ENCODE measurements at regions of chr16 and their contacts with region 1.

Region 1: DNA sequence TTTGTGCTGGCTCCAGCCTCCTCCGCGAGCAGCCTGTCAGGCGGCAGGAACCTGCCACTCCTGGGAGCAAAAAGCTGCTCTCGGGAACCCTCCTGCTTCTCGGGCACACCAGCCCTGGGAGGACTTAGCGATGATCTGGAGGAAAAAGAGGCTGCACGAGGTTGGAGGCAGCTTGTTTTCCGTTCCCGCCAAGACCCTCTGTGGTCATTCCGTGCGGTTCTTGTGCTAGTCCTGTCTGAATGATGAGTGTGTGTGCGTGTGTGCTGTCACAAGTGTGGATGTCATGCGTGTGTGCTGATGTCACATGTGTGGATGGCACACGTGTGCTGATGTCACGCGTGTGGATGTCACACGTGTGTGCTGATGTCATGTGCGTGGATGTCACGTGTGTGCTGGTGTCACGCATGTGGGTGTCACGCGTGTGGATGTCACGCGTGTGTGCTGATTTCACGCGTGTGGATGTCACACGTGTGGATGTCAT is 150.0 kb downstream of the NPIPB11 start:
- DNase-seq: no peak
- ATAC-seq: no peak
- H3K4me3 ChIP-seq: no peak overlapping the region
- H3K27ac ChIP-seq: no peak overlapping the region
- H3K4me1 ChIP-seq: peaks cover 0 to 8% of the 10 kb centered on the region in 2 experiments; a peak in 3 of 4 replicates
- H3K27me3 ChIP-seq: no peaks in the 10 kb centered on the region
- CTCF ChIP-seq: no peak
- POLR2A ChIP-seq: no peak
- RAD21 ChIP-seq: no peak

Region 2: DNA sequence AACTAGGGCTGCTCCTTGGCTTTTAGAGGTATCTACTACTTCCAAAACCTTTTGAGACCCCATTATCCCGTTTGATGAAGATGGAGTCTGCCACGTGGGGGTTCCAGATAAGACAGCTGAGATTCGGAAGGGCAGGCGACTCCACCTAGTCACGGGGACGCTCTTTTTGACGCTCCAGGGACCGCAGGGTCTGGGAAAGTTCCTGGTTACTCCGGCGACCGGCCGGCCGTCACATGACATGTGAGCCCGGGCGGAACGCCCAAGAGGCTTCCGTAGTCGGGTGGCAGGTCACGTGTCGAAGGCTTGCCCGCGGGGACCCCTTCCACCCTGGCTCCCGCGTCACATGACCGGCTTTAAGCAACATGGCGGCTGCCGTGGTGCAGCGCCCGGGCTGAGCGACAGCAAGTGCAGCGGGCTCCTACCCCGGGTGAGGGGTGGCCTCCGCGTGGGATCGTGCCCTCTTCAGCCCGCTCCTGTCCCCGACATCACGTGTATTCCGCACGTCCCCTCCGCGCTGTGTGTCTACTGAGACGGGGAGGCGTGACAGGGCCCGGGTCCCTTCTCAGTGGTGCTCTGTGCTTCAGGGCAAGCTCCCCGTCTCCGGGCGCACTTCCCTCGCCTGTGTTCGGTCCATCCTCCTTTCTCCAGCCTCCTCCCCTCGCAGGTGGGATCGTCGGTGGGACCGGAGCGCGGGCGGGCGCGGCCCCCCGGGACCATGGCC is 281.9 kb before region 1 on chr16 and contains the start of gene SPNS1:
- CTCF ChIA-PET with region 1: no interaction called
- POLR2A ChIA-PET with region 1: no interaction called
- RAD21 ChIA-PET with region 1: interaction called in 1 of 2 experiments, 4 read pairs
- intact Hi-C with region 1: loop called (anchors 10 kb)
- DNase-seq: peak; percentile 92
- ATAC-seq: peak; percentile 83
- H3K4me3 ChIP-seq: peak within 1 kb of the TSS; percentile 97
- H3K27ac ChIP-seq: peak within 1 kb of the TSS; percentile 34
- H3K4me1 ChIP-seq: peaks cover 6 to 18% of the 10 kb centered on the region in 2 experiments; a peak in 3 of 4 replicates
- H3K27me3 ChIP-seq: no peaks in the 10 kb centered on the region
- CTCF ChIP-seq: no peak
- POLR2A ChIP-seq: peak; percentile 49
- RAD21 ChIP-seq: no peak
- total RNA-seq, gene SPNS1: 32.3 TPM

Region 3: DNA sequence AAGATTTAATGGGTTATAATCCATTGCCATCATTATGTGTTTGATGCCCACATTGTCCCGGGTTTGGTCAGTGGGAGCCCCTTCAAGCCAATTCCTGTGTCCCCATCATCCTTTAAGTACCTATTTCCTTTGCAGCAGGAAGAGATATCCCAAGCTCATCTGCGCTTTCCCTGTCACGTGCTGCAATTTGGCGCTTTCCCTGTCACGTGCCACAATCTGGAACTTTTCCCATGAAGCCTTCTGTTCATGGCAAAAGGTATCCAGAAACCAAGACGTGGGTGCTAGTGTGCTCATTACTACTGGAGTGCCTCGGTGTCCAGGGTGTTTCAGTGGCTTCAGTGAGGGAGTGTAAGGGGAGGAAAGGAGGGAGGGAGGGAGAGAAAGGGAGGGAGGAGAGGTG is 18.6 kb before region 1 on chr16:
- CTCF ChIA-PET with region 1: no interaction called
- POLR2A ChIA-PET with region 1: no interaction called
- RAD21 ChIA-PET with region 1: no interaction called
- intact Hi-C with region 1: no loop called
- DNase-seq: no peak
- ATAC-seq: no peak
- H3K4me3 ChIP-seq: no peak overlapping the region
- H3K27ac ChIP-seq: no peak overlapping the region
- H3K4me1 ChIP-seq: no peaks in the 10 kb centered on the region
- H3K27me3 ChIP-seq: no peaks in the 10 kb centered on the region
- CTCF ChIP-seq: no peak
- POLR2A ChIP-seq: no peak
- RAD21 ChIP-seq: no peak